ENCODE measurements at regions of chr12 and their contacts with region 1.

Region 1: DNA sequence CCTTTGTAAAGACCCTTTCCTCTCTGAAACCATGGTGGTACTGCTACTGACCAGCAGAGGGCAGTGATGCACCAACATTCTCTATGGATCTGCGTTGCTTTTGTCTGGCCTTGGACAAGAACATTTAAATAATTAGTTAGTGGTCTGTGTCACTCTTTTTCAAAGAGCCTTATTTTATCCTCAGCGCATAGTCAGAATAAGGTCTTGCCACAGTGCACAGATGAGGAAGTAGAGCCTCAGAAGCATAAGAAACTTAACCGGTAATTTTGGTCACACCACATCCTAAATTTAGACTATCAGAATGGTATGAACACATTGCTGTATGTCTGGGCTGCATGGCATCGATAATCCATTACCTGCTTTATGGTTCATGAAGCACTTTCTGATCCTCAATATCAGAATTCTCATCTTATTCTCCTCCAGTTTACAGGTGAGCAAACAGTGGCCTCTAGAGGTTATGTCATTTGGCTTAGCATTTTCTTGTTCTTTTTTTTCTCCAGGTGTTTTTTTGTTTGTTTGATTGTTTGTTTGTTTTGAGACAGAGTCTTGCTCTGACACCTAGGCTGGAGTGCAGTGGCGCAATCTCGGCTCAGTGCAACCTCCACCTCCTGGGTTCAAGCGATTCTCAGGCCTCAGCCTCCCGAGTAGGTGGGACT is 23.7 kb upstream of the IFT81 start:
- DNase-seq: peak; percentile 61 to 84 (median 62)
- ATAC-seq: peak; percentile 72
- H3K4me3 ChIP-seq: no peak overlapping the region
- H3K27ac ChIP-seq: no peak overlapping the region; the same call in 2 of the 3 replicates
- H3K4me1 ChIP-seq: peaks cover 6 to 13% of the 10 kb centered on the region in 2 experiments; a peak in 4 of 5 replicates
- H3K27me3 ChIP-seq: no peaks in the 10 kb centered on the region
- CTCF ChIP-seq: peak; percentile 83 to 87 (median 86)
- EP300 ChIP-seq: no peak
- POLR2A ChIP-seq: no peak
- RAD21 ChIP-seq: peak; percentile 82 to 91

Region 2: DNA sequence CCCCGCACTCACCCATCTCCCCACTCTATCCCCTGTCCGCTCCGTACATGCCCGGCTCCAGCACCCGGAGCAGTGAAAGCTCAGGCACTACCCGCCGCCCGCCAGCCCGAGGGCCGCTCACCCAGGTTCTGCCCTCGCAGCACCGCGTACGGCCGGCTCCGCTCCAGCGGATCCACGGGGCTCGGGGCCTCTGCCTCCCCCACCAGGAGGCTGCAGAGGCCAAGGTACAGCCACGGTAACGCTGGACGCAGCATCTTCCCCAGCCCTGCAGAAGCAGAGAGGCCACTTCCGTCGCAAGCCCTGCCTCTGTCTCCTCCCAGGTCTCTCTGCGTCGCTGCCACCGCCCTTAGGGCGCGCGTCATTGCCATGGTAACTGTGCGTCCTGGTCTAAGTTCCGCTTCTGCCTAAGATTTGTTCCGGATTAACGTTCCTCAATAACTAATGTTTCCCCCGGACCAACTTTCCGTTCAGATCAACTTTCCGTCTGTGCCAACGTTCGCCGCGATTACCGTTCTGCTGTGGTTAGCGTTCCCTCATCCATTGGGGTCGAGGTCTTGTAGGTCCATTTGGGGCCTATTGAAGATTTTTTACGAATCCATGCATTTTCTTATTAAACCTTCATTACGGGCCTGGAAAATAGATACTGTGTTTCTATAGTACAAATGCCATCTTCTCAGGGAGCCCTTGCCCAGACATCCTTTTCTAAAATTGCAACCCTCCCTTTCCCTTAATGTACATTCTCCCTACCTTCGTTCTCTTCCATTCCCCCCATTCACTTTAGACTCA is 52.0 kb before region 1 on chr12 and contains the start of gene C12orf76:
- CTCF ChIA-PET with region 1: interaction called, 4 read pairs
- POLR2A ChIA-PET with region 1: no interaction called
- in situ Hi-C with region 1: no loop called
- intact Hi-C with region 1: loop called (anchors 5 kb)
- DNase-seq: peak; percentile 85 to 98 (median 90)
- ATAC-seq: peak; percentile 100
- H3K4me3 ChIP-seq: peak within 1 kb of the TSS; percentile 60
- H3K27ac ChIP-seq: peak within 1 kb of the TSS; percentile 75
- H3K4me1 ChIP-seq: peaks cover 11 to 16% of the 10 kb centered on the region in 2 experiments
- H3K27me3 ChIP-seq: no peaks in the 10 kb centered on the region
- CTCF ChIP-seq: peak in 2 of 3 experiments; percentile 53 to 54; a peak in 5 of 6 replicates
- EP300 ChIP-seq: peak; percentile 65
- POLR2A ChIP-seq: peak; percentile 76
- RAD21 ChIP-seq: peak; percentile 63 to 78
- polyA plus RNA-seq, gene C12orf76: 6.3 to 7.0 TPM

Region 3: DNA sequence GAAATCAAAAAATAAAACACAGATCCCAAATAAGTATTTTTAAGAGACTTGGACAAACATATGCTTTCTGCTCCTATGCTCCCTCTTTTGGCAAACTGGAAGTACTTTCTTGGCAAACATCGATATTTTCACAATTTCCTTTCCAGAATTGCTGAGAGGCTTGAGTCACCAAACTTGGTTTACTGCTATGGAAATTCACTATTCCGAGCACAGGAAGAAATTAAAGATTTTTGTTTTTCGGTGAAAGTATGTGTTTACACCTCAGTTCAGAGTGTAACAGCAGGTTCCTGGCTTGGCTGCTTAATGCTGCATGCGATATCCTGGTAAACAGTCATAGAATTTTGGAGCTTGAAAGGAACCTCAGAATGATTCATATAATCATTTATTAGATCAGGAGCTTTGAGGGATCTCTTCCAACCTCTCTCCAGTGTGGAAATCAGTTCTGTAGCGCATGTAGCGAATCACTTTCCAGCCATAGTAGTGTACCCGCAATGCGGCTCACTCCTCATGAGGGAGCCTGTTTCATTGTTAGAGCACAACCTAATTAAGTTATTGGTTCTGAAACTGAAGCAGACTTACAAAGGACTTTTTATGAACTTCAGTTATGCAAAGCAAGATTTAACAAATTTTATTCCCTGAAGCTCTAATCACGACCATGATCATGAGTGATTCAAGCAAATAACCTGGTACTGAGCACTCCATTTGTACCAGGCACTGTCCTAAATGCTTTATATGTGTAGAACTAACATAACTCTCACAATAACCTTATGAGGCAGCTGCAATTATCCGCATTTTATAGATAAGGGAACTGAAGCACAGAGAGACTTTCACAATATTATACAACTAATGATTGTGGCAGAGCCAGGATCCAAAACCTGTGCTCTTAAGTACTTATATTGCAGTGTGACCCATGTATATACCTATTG is 124.2 kb after region 1 on chr12:
- CTCF ChIA-PET with region 1: interaction called, 6 read pairs
- POLR2A ChIA-PET with region 1: no interaction called
- in situ Hi-C with region 1: no loop called
- intact Hi-C with region 1: loop called (anchors 5 kb)
- DNase-seq: peak in 2 of 4 experiments; percentile 22 to 23
- ATAC-seq: no peak; the same call in 2 of the 3 replicates
- H3K4me3 ChIP-seq: no peak overlapping the region
- H3K27ac ChIP-seq: no peak overlapping the region
- H3K4me1 ChIP-seq: no peaks in the 10 kb centered on the region
- H3K27me3 ChIP-seq: no peaks in the 10 kb centered on the region
- CTCF ChIP-seq: peak; percentile 41 to 61 (median 55); a peak in 5 of 6 replicates
- EP300 ChIP-seq: no peak
- POLR2A ChIP-seq: no peak
- RAD21 ChIP-seq: peak; percentile 19 to 54; a peak in 2 of 4 replicates

Region 4: GRCh38 chr12:110330544-110330943 is 230.1 kb after region 1 on chr12:
- CTCF ChIA-PET with region 1: no interaction called
- POLR2A ChIA-PET with region 1: interaction called, 3 read pairs
- in situ Hi-C with region 1: no loop called
- intact Hi-C with region 1: loop called (anchors 5 kb)
- DNase-seq: no peak
- ATAC-seq: peak; percentile 58; the same call in 2 of the 3 replicates
- H3K4me3 ChIP-seq: no peak overlapping the region
- H3K27ac ChIP-seq: no peak overlapping the region
- H3K4me1 ChIP-seq: no peaks in the 10 kb centered on the region
- H3K27me3 ChIP-seq: no peaks in the 10 kb centered on the region
- CTCF ChIP-seq: no peak
- EP300 ChIP-seq: no peak
- POLR2A ChIP-seq: no peak
- RAD21 ChIP-seq: no peak

Region 5: GRCh38 chr12:110426406-110426805 is 326.0 kb after region 1 on chr12:
- CTCF ChIA-PET with region 1: interaction called, 11 read pairs
- POLR2A ChIA-PET with region 1: interaction called, 3 read pairs
- in situ Hi-C with region 1: loop called (anchors 10 kb)
- intact Hi-C with region 1: loop called (anchors 1 kb)
- DNase-seq: no peak
- ATAC-seq: no peak
- H3K4me3 ChIP-seq: no peak overlapping the region
- H3K27ac ChIP-seq: no peak overlapping the region
- H3K4me1 ChIP-seq: peaks cover 12 to 18% of the 10 kb centered on the region in 2 experiments; a peak in 4 of 5 replicates
- H3K27me3 ChIP-seq: no peaks in the 10 kb centered on the region
- CTCF ChIP-seq: no peak
- EP300 ChIP-seq: no peak
- POLR2A ChIP-seq: no peak
- RAD21 ChIP-seq: no peak

Region 6: GRCh38 chr12:110600254-110600653 is 499.8 kb after region 1 on chr12:
- CTCF ChIA-PET with region 1: interaction called, 3 read pairs
- POLR2A ChIA-PET with region 1: no interaction called
- in situ Hi-C with region 1: loop called (anchors 10 kb)
- intact Hi-C with region 1: loop called (anchors 1 kb)
- DNase-seq: peak in 2 of 4 experiments; percentile 46 to 56
- ATAC-seq: peak; percentile 59
- H3K4me3 ChIP-seq: no peak overlapping the region
- H3K27ac ChIP-seq: no peak overlapping the region
- H3K4me1 ChIP-seq: no peaks in the 10 kb centered on the region
- H3K27me3 ChIP-seq: no peaks in the 10 kb centered on the region
- CTCF ChIP-seq: peak; percentile 41 to 80 (median 43); a peak in 5 of 6 replicates
- EP300 ChIP-seq: no peak
- POLR2A ChIP-seq: no peak
- RAD21 ChIP-seq: peak; percentile 86 to 94